ENCODE measurements at regions of chr7 and their contacts with region 1.

Region 1: DNA sequence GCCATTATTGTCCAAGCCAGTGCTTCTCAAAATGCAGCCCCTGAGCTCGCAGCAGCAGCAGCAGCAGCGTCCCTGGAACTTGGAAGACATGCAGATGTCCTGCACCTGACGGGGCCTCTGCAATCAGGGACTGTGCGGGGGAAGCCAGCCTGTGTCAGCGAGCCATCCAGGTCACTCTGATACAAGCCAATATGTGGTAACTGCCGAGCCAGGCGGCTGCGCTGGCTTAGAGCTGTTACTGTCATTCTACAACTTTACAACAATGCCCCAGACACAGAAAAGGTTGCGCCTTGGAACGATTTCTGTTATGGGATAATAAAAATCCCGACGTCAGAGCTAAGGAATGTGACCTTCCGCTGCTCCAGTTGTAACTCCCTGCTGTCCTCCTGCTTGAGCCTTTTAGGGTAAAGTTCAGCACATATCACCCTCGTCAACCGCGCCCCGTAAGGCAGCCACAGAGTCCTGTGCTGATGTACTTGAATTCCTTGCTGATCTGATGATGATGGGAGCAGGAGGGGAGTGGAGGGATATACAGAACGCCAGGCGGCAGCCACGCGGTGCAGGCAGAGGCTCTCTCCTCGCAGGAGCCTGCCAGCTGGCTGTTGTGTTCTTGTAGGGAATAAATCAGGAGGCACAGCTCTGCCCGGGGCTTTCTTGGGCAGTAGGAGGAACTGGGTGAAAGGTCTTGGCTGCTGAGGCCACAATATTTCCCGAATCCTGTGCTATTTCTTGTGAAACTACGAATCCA is 20.0 kb upstream of the CRYGN start:
- DNase-seq: peak; percentile 87 to 95 (median 92)
- H3K4me3 ChIP-seq: peak overlapping the region; percentile 17 to 35 (median 31)
- H3K27ac ChIP-seq: peak overlapping the region; percentile 88 to 96
- H3K4me1 ChIP-seq: peaks cover 0 to 24% (median 18%) of the 10 kb centered on the region in 3 donors
- H3K27me3 ChIP-seq: no peaks in the 10 kb centered on the region
- CTCF ChIP-seq: peak; percentile 21

Region 2: GRCh38 chr7:151372612-151373265 is 87.2 kb before region 1 on chr7:
- intact Hi-C with region 1: loop called (anchors 10 kb)
- DNase-seq: peak; percentile 24 to 36 (median 28)
- H3K4me3 ChIP-seq: no peak overlapping the region
- H3K27ac ChIP-seq: no peak overlapping the region
- H3K4me1 ChIP-seq: peaks cover 0 to 4% (median 0%) of the 10 kb centered on the region in 3 donors
- H3K27me3 ChIP-seq: no peaks in the 10 kb centered on the region
- CTCF ChIP-seq: no peak

Measured in kidney (tissue), 22 donors.